ENCODE measurements at regions of chr2 and their contacts with region 1.

Region 1: DNA sequence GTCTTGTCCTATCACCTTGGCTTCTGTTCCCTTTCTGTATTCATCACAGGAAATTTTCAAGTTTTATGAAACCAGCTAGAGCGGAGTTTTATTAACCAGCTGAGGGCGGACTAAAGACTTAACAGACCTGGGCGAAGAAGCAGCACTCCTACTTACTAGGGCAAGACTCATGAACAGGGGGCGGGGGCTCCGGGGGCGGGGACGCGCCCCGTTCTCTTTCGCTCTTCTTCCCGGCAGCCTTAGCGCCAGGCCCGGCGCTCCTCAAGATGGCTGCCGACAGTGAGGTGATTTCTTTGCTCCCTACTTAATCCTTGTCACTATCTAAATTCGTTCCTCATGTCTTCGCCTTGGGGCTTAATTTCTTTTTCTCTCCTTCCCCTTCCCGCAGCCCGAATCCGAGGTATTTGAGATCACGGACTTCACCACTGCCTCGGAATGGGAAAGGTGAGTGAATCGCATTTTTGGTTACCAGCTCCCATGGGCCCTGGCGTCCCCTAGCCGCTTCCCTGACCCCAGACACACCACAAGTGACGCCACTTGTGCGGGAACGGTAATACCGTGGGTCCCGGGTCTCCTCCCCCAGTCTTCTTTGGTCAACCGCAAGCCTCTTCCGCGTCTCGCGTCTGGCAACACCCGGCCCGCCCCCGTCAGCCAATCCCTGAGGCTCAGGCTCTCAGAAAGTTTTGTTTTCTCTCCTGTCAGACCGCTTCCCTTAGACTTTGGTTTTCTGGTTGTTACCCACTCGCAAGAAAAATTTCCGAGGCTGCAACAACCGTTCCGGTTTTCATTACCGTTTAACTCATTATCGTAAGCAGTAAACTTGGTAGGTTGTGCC is at the start of gene RAB3GAP1:
- DNase-seq: peak; percentile 96
- ATAC-seq: peak; percentile 79
- H3K4me3 Mint-ChIP-seq: peak within 1 kb of the TSS; percentile 92
- H3K27ac Mint-ChIP-seq: peak within 1 kb of the TSS; percentile 100
- H3K4me1 Mint-ChIP-seq: peaks cover 40% of the 10 kb centered on the region
- H3K27me3 Mint-ChIP-seq: no peaks in the 10 kb centered on the region
- total RNA-seq, gene RAB3GAP1: 34.5 to 39.8 TPM

Region 2: DNA sequence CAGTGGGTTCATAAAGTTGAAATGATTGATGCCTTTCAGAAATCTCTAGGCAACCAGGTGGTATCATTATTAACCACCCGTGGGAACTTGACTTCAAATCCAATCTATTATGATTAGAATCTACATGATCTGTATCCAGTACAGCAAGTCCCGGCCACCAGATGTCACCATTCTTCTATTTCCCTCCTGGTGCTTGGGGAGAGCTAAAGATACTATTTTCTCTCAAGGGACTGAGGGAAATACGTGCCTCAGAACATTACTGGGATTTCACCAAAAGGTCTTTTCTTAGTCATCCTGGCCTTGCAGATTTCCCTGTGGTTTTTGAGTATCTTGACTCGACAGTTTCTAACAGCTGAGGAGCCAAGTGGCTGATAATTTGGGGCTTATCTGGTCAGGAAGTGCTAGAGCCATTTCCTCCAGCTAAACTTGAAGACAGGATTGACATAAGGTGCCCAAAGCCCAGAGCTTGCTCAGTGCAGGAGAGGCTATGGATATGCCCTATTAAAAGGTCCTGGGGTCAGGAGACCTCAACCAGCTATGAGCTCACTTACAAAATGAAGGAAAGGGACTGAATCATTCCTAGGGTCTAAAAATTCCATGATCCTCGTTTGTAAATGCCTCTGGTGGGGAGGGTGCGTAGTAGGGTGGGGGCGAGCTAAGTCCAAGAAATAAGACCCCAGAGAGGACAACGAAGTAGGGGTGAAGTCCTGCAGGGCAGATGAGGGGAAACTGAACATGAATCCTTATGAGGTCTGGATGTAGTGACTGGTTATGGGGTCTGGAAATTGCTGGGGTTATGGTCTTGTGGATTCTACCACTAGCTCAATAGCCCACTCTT is 933.8 kb before region 1 on chr2:
- CTCF ChIA-PET with region 1: no interaction called
- POLR2A ChIA-PET with region 1: no interaction called
- intact Hi-C with region 1: loop called in 1 of 2 experiments (anchors 5 kb)
- DNase-seq: peak; percentile 93
- ATAC-seq: peak; percentile 64
- H3K4me3 Mint-ChIP-seq: peak overlapping the region; percentile 80
- H3K27ac Mint-ChIP-seq: no peak overlapping the region
- H3K4me1 Mint-ChIP-seq: peaks cover 31% of the 10 kb centered on the region
- H3K27me3 Mint-ChIP-seq: peaks cover 2% of the 10 kb centered on the region

Region 3: DNA sequence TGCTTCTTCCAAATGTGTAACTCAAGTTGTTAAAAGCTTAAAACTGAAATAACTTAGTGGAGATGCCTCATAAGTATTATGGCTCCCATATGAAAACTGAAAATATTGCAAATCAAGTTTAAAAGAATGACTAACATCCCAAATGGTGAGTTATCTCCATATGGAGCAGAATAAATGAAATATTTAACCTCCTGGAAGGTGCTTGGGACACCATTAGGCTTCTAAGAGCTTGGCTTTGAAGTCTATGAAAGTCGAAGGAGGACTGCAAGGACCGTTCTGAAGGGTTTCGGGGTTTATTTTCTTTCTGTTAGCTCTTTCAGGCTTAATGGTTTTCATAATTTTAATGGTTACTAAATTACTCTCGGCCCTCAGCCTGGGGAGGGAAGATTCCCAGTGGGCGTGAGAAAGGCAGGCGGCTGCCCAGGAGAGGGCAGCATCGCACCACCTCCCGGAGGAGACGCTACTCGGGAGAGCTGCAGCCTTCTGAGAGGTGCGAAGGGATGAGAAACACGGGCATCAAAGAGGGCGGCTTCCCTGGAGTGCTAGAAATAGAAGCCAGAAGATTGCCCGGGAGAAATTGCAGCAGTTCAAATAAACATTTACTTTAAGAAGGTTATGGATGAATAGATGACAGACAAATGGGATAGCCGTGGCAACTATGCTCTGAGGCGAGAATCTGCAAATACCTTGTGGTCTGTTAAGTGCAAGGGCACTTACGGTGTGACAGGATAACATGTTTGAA is 48.1 kb before region 1 on chr2:
- CTCF ChIA-PET with region 1: interaction called, 15 read pairs
- POLR2A ChIA-PET with region 1: no interaction called
- intact Hi-C with region 1: no loop called
- DNase-seq: peak; percentile 85
- ATAC-seq: peak; percentile 96
- H3K4me3 Mint-ChIP-seq: no peak overlapping the region
- H3K27ac Mint-ChIP-seq: no peak overlapping the region
- H3K4me1 Mint-ChIP-seq: peaks cover 4% of the 10 kb centered on the region
- H3K27me3 Mint-ChIP-seq: peaks cover 11% of the 10 kb centered on the region

Region 4: DNA sequence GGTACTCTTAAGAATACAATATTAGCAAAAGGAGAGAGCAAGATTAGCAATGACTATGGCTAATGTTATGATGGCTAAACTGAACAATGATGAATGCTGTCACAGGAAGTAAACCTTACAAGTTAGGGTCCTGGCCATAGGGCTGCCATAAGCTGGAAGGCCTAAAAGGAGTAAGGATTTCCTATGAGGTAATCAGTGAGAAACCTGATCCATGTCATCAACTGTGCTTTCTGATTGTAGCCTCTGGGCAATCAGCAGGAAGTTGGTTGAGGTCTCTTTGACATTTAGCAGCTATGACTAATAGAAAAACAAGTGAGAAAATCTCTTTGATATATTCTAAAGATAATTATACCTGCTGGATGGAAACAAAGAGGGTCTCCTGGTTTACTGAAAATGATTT is 192.8 kb after region 1 on chr2:
- CTCF ChIA-PET with region 1: interaction called, 4 read pairs
- POLR2A ChIA-PET with region 1: no interaction called
- intact Hi-C with region 1: loop called in 1 of 2 experiments (anchors 1 kb)
- DNase-seq: peak; percentile 36
- ATAC-seq: peak; percentile 98
- H3K4me3 Mint-ChIP-seq: no peak overlapping the region
- H3K27ac Mint-ChIP-seq: peak overlapping the region; percentile 84
- H3K4me1 Mint-ChIP-seq: peaks cover 8% of the 10 kb centered on the region
- H3K27me3 Mint-ChIP-seq: no peaks in the 10 kb centered on the region

Region 5: DNA sequence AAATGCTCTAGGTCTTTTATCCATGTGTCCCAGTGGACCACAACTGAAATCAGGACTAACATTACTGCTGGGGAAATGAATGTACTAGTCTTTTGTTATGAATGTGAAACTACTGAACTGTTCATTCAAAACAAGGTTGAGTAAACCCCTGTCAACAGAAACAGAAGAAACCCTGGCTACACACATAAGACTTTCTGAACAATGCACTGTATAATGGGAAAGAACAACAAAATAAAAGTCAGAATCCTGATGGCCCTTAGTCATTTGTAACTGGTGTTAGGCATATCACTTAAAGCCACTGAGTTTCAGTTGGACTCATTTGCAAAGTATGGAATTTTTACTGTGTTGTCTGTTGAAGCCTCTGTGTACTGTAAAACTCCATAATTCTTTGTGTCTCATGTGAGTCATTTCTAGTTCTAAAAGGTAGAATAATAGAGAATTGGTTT is 612.4 kb after region 1 on chr2:
- CTCF ChIA-PET with region 1: no interaction called
- POLR2A ChIA-PET with region 1: no interaction called
- intact Hi-C with region 1: loop called in 1 of 2 experiments (anchors 5 kb)
- DNase-seq: no peak
- ATAC-seq: peak; percentile 79
- H3K4me3 Mint-ChIP-seq: no peak overlapping the region
- H3K27ac Mint-ChIP-seq: peak overlapping the region; percentile 1
- H3K4me1 Mint-ChIP-seq: peaks cover 30% of the 10 kb centered on the region
- H3K27me3 Mint-ChIP-seq: no peaks in the 10 kb centered on the region

Region 6: GRCh38 chr2:135685361-135685760 is 633.1 kb after region 1 on chr2:
- CTCF ChIA-PET with region 1: no interaction called
- POLR2A ChIA-PET with region 1: no interaction called
- intact Hi-C with region 1: no loop called
- DNase-seq: no peak
- ATAC-seq: no peak
- H3K4me3 Mint-ChIP-seq: no peak overlapping the region
- H3K27ac Mint-ChIP-seq: peak overlapping the region; percentile 1
- H3K4me1 Mint-ChIP-seq: peaks cover 25% of the 10 kb centered on the region
- H3K27me3 Mint-ChIP-seq: no peaks in the 10 kb centered on the region

Region 7: GRCh38 chr2:135948642-135949355 is 896.5 kb after region 1 on chr2:
- CTCF ChIA-PET with region 1: no interaction called
- POLR2A ChIA-PET with region 1: no interaction called
- intact Hi-C with region 1: loop called in 1 of 2 experiments (anchors 5 kb)
- DNase-seq: no peak
- ATAC-seq: peak; percentile 81
- H3K4me3 Mint-ChIP-seq: peak overlapping the region; percentile 39
- H3K27ac Mint-ChIP-seq: peak overlapping the region; percentile 84
- H3K4me1 Mint-ChIP-seq: peaks cover 55% of the 10 kb centered on the region
- H3K27me3 Mint-ChIP-seq: no peaks in the 10 kb centered on the region

Measured in activated CD4-positive, alpha-beta T cell treated with anti-CD3 and anti-CD28 coated beads for 36 hours (primary cell).